Motor neuron (in vitro differentiated cells): ENCODE measurements at regions of chr17 and their contacts with region 1.

Region 1: DNA sequence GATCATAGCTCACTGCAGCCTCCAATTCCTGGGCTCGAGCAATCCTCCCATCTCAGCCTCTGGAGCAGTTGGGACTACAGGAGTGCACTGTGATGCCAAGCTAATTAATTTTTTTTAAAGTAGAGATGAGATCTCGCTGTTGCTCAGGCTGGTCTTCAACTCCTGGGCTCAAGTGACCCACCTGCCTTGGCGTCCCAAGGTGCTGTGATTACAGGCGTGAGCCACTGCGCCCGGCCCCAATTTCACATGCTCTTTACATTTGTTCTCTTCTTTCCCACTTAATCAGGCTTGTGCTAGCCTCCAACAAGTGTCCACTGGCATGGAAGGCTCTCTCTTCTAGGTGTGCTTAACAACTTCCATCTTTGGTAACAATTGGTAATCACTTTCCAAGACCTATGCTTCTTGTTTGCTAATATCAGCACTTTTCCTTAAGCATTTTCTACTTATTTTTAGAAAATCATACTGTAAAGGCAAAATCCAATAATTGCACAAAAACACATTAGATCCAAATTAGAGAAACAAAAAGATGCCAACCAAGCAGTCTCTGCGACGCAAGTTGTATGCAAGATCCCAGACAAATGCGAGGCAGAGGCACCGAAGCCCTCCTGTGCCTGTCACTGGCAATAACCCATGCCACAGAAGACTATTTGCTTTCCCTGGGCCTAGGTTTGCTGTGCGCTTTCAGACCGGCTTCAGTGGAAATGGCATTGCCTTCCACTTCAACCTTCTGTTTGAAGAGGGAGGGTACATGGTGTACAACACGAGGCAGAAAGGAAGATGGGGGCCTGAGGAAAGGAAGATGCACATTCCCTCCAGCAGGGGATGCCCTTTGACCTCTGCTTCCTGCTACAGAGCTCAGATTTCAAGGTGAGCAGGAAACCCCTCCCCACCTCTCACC is 52.6 kb downstream of the NOS2 start:
- ATAC-seq: no peak
- H3K4me3 ChIP-seq: no peak overlapping the region
- H3K27ac ChIP-seq: no peak overlapping the region
- H3K4me1 ChIP-seq: no peaks in the 10 kb centered on the region

Region 2: GRCh38 chr17:27526604-27527230 is 221.0 kb before region 1 on chr17:
- in situ Hi-C with region 1: loop called in 1 of 9 experiments (anchors 25 kb)
- ATAC-seq: peak in 6 of 8 experiments; percentile 31 to 73 (median 48)
- H3K4me3 ChIP-seq: no peak overlapping the region
- H3K27ac ChIP-seq: no peak overlapping the region
- H3K4me1 ChIP-seq: peaks cover 21 to 37% of the 10 kb centered on the region in 2 donors